Transverse colon (tissue), 4 donors: ENCODE measurements at regions of chr1 and their contacts with region 1.

Region 1: DNA sequence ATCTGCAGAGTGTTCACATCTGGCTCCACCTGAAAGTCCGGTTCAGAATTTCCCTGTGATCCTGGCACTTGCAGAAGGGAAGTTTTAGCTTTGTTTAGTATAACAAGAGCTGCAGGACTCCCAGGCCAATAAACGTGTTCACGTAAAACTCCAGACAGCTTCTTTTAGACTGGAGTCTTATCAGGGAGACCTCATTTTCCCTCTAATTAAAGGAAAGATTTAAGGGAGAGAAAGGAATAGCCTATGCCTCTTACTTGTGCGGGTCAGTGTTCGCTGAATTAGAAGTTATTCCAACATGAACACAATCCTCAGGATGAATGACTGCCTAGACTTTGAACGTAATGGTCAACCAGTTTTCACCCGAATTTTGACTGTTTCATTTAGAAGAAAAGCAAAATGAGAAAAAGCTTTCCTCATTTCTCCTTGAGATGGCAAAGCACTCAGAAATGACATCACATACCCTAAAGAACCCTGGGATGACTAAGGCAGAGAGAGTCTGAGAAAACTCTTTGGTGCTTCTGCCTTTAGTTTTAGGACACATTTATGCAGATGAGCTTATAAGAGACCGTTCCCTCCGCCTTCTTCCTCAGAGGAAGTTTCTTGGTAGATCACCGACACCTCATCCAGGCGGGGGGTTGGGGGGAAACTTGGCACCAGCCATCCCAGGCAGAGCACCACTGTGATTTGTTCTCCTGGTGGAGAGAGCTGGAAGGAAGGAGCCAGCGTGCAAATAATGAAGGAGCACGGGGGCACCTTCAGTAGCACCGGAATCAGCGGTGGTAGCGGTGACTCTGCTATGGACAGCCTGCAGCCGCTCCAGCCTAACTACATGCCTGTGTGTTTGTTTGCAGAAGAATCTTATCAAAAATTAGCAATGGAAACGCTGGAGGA is 202.1 kb upstream of the SGIP1 start:
- DNase-seq: peak; percentile 64
- H3K4me3 ChIP-seq: peak overlapping the region; percentile 9 to 60 (median 32)
- H3K27ac ChIP-seq: peak overlapping the region; percentile 81 to 87 (median 83)
- H3K4me1 ChIP-seq: peaks cover 0 to 41% (median 16%) of the 10 kb centered on the region in 4 donors
- H3K27me3 ChIP-seq: no peaks in the 10 kb centered on the region
- CTCF ChIP-seq: peak in 4 of 5 experiments; percentile 4 to 50 (median 27)
- EP300 ChIP-seq: peak; percentile 11
- POLR2A ChIP-seq: peak; percentile 64

Region 2: DNA sequence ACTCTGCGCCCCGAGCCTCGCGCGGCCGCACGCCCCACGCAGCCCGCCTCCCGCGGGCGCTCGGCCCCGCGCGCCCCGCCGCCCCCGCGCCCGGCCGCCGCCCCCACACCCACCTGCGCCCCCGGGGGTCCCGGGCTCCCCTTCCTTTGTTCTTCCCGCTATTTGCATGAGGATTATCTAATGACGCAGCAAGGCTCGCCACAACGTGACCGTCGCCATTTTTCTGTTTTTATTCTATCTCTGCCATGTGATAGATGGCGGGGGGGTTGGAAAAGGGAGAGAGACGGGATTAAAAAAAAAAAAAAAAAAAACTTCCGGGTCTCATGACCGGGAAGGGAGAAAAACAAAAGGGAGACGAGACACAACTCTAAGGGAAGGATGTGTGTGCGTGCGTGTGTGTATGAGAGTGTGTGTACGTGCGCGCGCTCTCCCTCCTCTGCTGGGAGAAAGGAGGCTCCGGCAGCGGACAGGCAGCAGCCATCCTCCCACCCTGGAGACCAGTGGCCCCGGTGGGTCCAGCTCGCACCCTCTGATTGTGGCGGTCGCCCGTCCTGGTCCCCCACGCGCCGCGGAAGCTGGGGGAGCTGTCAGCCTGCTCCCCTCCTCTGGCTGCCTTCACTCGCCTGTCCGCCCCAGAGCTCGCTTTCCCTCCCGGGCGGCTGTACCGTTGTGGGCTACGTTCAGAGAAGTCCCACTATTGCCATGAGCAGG is 1264.3 kb before region 1 on chr1:
- in situ Hi-C with region 1: loop called in 1 of 4 experiments (anchors 25 kb)
- intact Hi-C with region 1: no loop called
- DNase-seq: peak; percentile 71
- H3K4me3 ChIP-seq: peak overlapping the region; percentile 87 to 97 (median 92)
- H3K27ac ChIP-seq: peak overlapping the region; percentile 97 to 100 (median 98)
- H3K4me1 ChIP-seq: peaks cover 18 to 44% (median 23%) of the 10 kb centered on the region in 4 donors
- H3K27me3 ChIP-seq: no peaks in the 10 kb centered on the region
- CTCF ChIP-seq: no peak
- EP300 ChIP-seq: no peak
- POLR2A ChIP-seq: peak; percentile 88

Region 3: GRCh38 chr1:66058558-66058957 is 273.3 kb before region 1 on chr1:
- in situ Hi-C with region 1: no loop called
- intact Hi-C with region 1: no loop called
- DNase-seq: no peak
- H3K4me3 ChIP-seq: no peak overlapping the region
- H3K27ac ChIP-seq: no peak overlapping the region
- H3K4me1 ChIP-seq: no peaks in the 10 kb centered on the region
- H3K27me3 ChIP-seq: no peaks in the 10 kb centered on the region
- CTCF ChIP-seq: no peak
- EP300 ChIP-seq: no peak
- POLR2A ChIP-seq: no peak

Region 4: DNA sequence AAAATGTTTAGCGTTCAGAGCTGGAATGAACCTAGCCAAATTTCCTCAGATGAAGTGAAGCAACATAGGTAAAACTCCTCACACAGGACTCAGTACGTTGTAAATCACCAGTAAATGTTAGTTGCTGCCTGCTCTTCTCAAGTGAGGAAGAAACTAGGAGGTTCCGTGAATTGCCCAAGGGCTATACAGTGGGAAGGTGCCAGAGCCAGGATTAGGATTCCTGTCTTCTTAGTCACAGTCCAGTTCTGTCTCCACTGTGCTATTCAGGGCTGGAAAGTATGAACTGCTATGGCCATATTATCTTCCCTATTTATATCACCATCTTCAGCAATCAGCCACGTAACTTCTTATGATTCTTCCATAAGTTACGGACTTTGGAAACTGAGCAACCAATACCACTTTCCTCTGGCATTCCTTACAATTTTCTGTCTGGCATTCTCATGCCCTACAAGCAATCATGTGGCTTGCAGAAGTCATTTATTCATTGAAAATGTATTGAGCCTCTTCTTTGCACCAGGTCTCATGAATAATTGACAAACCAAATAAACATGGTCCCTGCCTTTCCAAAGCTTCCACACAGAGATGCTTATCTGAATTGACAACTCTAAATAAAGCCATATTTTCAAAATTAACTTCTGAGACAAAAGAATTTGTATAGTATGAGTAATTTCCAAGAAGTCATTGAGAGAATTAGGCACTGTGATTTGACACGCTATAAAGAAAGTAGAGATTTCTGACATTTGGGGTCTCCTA is 69.5 kb before region 1 on chr1:
- in situ Hi-C with region 1: loop called in 1 of 4 experiments (anchors 10 kb)
- intact Hi-C with region 1: no loop called
- DNase-seq: peak; percentile 49
- H3K4me3 ChIP-seq: no peak overlapping the region
- H3K27ac ChIP-seq: peak overlapping the region; percentile 4 to 68 (median 24)
- H3K4me1 ChIP-seq: peaks cover 0 to 25% (median 5%) of the 10 kb centered on the region in 4 donors
- H3K27me3 ChIP-seq: no peaks in the 10 kb centered on the region
- CTCF ChIP-seq: no peak
- EP300 ChIP-seq: no peak
- POLR2A ChIP-seq: no peak

Region 5: DNA sequence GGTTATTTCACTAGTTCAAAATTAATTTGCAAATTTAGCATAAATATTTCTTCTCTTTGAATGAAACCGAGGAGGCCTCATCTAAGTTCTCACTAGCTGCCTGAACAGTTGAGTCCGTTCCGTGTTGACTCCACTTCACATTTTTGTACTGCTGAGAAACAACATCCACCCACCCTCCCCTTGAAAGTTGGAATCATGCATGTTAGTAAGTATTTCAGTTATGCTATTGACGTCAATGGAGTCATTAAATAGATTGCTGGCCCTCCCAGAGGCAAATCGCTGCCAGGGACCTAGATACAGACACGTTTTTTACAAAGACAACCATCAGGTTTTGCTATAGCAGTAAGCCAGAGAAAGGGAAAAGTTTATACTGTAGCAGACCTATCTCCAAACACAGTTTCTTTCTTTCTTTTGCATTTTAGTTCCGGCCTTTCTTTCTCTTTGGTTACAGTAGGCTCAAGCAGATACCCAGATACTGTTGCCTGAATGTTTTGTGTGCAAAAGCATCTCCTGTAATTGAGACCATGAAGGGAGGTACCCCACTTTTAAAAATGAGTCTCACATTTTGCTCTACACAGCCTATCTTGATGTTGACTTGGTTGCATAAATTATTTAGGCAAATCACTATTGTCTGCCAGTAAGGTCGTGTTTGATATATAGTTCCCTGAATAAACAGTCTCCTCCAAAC is 60.5 kb before region 1 on chr1:
- in situ Hi-C with region 1: loop called in 1 of 4 experiments (anchors 10 kb)
- intact Hi-C with region 1: loop called (anchors 5 kb)
- DNase-seq: peak; percentile 73
- H3K4me3 ChIP-seq: no peak overlapping the region
- H3K27ac ChIP-seq: peak overlapping the region; percentile 77 to 90 (median 84)
- H3K4me1 ChIP-seq: peaks cover 16 to 62% (median 22%) of the 10 kb centered on the region in 4 donors
- H3K27me3 ChIP-seq: no peaks in the 10 kb centered on the region
- CTCF ChIP-seq: no peak
- EP300 ChIP-seq: peak; percentile 94
- POLR2A ChIP-seq: no peak

Region 6: DNA sequence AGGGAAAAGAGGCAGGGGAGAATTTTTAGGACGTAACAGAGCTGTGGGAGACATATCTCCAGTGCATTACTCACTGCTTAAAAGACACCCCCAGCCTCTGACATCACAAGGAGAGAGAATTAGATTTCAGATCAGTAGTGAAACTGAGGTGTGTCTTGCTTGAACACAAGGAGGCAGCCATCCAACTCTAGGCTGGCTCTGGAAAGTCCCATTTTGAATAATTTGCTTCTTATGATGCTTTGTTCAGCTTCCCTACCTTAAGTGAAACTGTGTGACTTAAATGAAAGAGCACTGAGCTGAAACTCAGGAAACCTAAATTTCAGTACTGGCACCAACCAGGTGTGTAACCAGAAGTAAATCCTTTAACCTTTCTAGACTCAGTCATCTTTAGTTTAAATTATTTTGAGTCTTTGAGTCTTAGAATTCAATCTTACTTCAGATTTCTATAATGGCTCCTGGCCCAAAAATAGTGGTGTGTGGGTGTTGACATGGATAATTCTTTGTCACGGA is 49.5 kb before region 1 on chr1:
- in situ Hi-C with region 1: no loop called
- intact Hi-C with region 1: no loop called
- DNase-seq: peak; percentile 47
- H3K4me3 ChIP-seq: no peak overlapping the region
- H3K27ac ChIP-seq: peak overlapping the region in 2 of 4 donors; percentile 19 to 52
- H3K4me1 ChIP-seq: peaks cover 0 to 27% (median 12%) of the 10 kb centered on the region in 4 donors
- H3K27me3 ChIP-seq: no peaks in the 10 kb centered on the region
- CTCF ChIP-seq: no peak
- EP300 ChIP-seq: no peak
- POLR2A ChIP-seq: no peak